ENCODE measurements at regions of chr3 and their contacts with region 1.

Region 1: DNA sequence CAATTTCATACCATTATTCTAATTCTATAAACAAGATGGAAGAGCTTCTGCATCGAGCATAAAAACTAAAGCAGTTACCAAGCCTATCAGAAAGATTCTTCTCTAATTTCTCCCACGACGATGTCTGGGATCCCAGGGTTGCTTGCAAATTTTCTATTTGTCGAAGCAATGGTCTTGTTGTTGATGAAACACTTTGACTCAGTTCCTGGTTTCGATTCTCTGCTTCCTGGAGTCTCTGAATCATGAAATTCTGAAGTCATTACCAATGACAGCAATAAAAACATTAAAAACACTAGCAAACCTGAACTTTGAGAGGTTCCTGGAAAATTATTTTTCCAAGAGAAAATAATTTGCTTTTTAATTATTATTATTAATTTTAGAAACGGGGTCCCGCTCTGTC is 18.7 kb downstream of the TMF1 start:
- DNase-seq: no peak
- H3K4me3 Mint-ChIP-seq: no peak overlapping the region
- H3K27ac Mint-ChIP-seq: peak overlapping the region; percentile 82
- H3K4me1 Mint-ChIP-seq: peaks cover 20% of the 10 kb centered on the region
- H3K27me3 Mint-ChIP-seq: no peaks in the 10 kb centered on the region

Region 2: DNA sequence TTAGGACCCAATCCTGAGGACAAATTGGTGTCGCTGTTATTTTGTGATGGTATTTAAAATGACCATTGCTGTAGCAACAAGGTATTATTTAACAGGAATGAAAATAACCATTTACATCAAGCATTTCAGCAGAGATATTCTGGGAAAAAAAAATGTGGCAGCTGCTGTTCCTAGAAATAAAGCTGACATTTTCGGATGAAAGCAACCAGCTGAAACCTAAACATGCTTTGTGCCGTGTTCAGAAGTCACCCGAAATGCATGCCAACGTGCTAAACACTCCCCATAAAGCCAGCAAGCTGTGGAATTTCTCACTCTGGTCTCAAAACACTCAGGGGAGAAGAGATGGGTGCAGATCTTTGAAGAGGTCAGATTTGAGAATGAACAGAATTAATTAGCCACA is 69.6 kb before region 1 on chr3:
- intact Hi-C with region 1: no loop called
- DNase-seq: no peak
- H3K4me3 Mint-ChIP-seq: no peak overlapping the region
- H3K27ac Mint-ChIP-seq: no peak overlapping the region
- H3K4me1 Mint-ChIP-seq: no peaks in the 10 kb centered on the region
- H3K27me3 Mint-ChIP-seq: peaks cover 26% of the 10 kb centered on the region

Region 3: GRCh38 chr3:69013253-69014021 is 20.0 kb before region 1 on chr3 and contains the start of gene EOGT:
- intact Hi-C with region 1: loop called (anchors 2 kb)
- DNase-seq: peak; percentile 95
- H3K4me3 Mint-ChIP-seq: peak within 1 kb of the TSS; percentile 85
- H3K27ac Mint-ChIP-seq: peak within 1 kb of the TSS; percentile 90
- H3K4me1 Mint-ChIP-seq: peaks cover 15% of the 10 kb centered on the region
- H3K27me3 Mint-ChIP-seq: no peaks in the 10 kb centered on the region
- total RNA-seq, gene EOGT: 12.6 and 13.5 TPM in 2 replicates

Region 4: GRCh38 chr3:69020424-69020823 is 13.0 kb before region 1 on chr3:
- intact Hi-C with region 1: loop called (anchors 1 kb)
- DNase-seq: no peak
- H3K4me3 Mint-ChIP-seq: no peak overlapping the region
- H3K27ac Mint-ChIP-seq: no peak overlapping the region
- H3K4me1 Mint-ChIP-seq: peaks cover 7% of the 10 kb centered on the region
- H3K27me3 Mint-ChIP-seq: no peaks in the 10 kb centered on the region

Region 5: GRCh38 chr3:69051756-69052471 is 18.4 kb after region 1 on chr3 and contains the start of gene TMF1:
- intact Hi-C with region 1: loop called (anchors 1 kb)
- DNase-seq: peak; percentile 99
- H3K4me3 Mint-ChIP-seq: peak within 1 kb of the TSS; percentile 95
- H3K27ac Mint-ChIP-seq: peak within 1 kb of the TSS; percentile 95
- H3K4me1 Mint-ChIP-seq: peaks cover 35% of the 10 kb centered on the region
- H3K27me3 Mint-ChIP-seq: no peaks in the 10 kb centered on the region
- total RNA-seq, gene TMF1: 35.9 and 39.0 TPM in 2 replicates

Measured in activated CD4-positive, alpha-beta T cell treated with anti-CD3 and anti-CD28 coated beads, Interleukin-2, amount 10 ng/mL, durations not matched to agents 24 days and 14 days (primary cell).